Right cardiac atrium (tissue), 5 donors: ENCODE measurements at regions of chr1 and their contacts with region 1.

Region 1: DNA sequence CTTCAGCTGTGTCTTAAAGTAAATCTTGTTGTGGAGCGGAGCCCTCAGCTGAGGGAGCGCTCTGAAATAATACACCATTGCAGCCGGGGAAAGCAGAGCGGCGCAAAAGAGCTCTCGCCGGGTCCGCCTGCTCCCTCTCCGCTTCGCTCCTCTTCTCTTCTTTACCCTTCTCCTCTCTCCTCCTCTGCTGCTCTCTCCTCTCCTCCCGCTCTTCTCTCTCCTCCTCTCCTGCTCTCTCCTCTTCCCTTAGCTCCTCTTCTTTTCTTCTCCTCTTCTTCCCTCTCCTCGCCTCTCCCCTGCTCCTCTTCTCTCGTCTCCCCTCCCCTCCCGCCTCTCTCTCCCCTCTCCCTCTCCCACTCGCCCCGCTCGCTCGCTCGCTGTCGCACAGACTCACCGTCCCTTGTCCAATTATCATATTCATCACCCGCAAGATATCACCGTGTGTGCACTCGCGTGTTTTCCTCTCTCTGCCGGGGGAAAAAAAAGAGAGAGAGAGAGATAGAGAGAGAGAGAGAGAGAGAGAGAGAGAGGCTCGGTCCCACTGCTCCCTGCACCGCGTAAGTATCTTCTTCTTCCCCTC is at the start of gene PROX1:
- DNase-seq: peak; percentile 22 to 66 (median 63)
- ATAC-seq: peak; percentile 49 to 93
- H3K4me3 ChIP-seq: peak within 1 kb of the TSS; percentile 74
- H3K27ac ChIP-seq: peak within 1 kb of the TSS; percentile 74
- H3K4me1 ChIP-seq: no peaks in the 10 kb centered on the region
- H3K27me3 ChIP-seq: no peaks in the 10 kb centered on the region
- total RNA-seq, gene PROX1: 63.6 to 98.8 (median 86.5) TPM

Region 2: DNA sequence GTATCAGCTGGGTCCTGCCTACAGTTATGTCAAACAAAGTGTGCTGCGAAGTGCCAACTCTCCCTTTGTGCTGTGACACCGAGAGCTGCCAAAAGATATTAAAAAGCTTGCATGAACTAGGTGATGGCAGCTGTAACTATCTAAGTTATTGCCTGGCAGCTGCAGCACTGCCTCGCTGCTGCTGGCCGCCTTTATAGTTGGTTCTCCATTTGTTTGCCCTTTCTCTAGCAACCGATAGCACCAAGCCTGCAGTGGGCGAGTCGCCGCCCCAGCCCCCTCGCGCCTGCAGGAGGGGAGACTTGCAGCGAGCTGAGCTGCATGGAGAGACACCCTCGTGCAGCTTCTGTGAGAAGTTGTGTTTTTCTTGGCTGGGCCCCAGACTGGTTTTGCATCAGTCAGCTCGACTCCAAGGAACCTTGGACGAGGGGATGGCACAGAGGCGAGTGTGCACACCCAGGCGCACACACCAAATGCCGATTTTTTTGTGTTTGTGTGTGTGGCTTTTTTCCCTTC is 606.4 kb before region 1 on chr1:
- intact Hi-C with region 1: loop called in 1 of 4 experiments (anchors 5 kb)
- DNase-seq: peak; percentile 32 to 79 (median 69)
- ATAC-seq: peak; percentile 85 to 88
- H3K4me3 ChIP-seq: no peak overlapping the region
- H3K27ac ChIP-seq: no peak overlapping the region
- H3K4me1 ChIP-seq: no peaks in the 10 kb centered on the region
- H3K27me3 ChIP-seq: no peaks in the 10 kb centered on the region

Region 3: DNA sequence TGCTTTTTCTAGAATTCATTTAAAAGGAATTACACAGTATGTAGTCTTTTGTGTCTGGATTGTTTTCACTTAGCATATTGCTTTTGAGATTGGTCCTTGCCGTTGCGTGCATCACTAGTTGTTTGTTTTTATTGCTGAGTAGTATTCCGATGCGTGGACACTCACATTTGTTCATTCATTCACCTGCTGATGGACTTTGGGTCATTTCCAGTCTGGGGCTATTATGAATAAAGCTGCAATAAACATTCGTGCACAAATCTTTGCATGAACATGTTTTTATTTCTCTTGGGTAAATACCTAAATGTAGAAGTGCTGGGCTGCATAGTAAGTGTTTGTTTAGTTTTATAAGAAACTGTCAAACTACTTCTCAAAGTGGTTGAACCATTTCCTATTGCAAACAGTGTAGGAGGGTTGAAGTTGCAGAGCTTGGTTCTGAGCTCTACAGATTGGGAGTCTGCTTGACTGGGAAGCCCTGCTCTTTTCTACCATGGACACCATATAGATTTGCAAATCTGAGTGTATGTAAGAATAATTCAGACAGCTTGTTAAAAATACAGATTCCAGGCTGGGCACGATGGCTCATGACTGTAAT is 404.9 kb before region 1 on chr1:
- intact Hi-C with region 1: no loop called
- DNase-seq: no peak
- ATAC-seq: no peak
- H3K4me3 ChIP-seq: no peak overlapping the region
- H3K27ac ChIP-seq: no peak overlapping the region
- H3K4me1 ChIP-seq: no peaks in the 10 kb centered on the region
- H3K27me3 ChIP-seq: no peaks in the 10 kb centered on the region

Region 4: GRCh38 chr1:213905344-213905743 is 82.7 kb before region 1 on chr1:
- intact Hi-C with region 1: no loop called
- DNase-seq: peak; percentile 36 to 85 (median 80)
- ATAC-seq: peak; percentile 91 to 96
- H3K4me3 ChIP-seq: no peak overlapping the region
- H3K27ac ChIP-seq: no peak overlapping the region
- H3K4me1 ChIP-seq: no peaks in the 10 kb centered on the region
- H3K27me3 ChIP-seq: no peaks in the 10 kb centered on the region

Region 5: GRCh38 chr1:214029796-214030195 is 41.8 kb after region 1 on chr1:
- intact Hi-C with region 1: loop called in 1 of 4 experiments (anchors 2 kb)
- DNase-seq: no peak
- ATAC-seq: peak; percentile 82 to 83
- H3K4me3 ChIP-seq: no peak overlapping the region
- H3K27ac ChIP-seq: peak overlapping the region; percentile 98
- H3K4me1 ChIP-seq: peaks cover 2% of the 10 kb centered on the region
- H3K27me3 ChIP-seq: no peaks in the 10 kb centered on the region

Region 6: DNA sequence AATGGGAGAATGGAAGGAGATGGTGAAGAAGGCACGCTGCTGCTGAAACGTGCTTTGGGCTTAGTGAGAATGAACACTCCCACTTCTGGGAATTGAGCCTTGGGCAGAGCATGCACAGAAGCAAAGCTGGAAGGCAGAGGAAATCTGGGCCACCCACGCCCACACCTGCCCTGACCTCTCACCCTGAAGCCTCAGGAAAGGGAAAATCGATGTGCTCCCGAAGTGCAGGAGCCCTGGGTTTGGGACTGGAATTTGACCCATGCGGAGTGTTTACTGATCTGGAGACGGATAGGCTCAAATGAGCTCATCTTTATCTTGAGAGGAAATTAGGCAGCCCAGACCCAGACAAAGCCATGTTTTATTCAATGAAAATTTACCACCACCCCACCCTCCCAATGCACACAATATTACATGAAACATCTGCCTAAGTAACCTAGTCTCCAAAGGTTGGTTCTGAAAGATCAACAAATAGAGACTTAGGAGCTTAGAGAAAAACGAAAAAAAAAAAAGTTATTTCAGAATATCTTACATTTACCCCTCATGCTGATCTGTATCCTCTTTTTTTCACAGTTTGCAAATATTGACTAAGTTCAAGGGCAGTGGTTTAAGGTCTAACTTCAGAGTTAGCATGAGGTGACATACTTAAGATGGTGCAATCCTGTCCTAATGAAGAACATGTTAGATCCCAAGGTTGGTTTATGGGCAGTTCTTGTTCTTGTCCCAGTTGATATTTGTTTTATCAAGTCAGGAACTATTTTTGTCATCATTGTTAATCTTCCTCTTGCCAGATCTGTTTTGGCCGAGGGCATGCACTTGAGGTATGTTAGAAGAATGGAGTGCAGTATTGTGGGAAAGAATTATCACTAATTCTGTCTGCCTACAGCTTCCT is 62.7 kb after region 1 on chr1:
- intact Hi-C with region 1: no loop called
- DNase-seq: no peak
- ATAC-seq: peak; percentile 14 to 29
- H3K4me3 ChIP-seq: no peak overlapping the region
- H3K27ac ChIP-seq: no peak overlapping the region
- H3K4me1 ChIP-seq: peaks cover 2% of the 10 kb centered on the region
- H3K27me3 ChIP-seq: no peaks in the 10 kb centered on the region

Region 7: DNA sequence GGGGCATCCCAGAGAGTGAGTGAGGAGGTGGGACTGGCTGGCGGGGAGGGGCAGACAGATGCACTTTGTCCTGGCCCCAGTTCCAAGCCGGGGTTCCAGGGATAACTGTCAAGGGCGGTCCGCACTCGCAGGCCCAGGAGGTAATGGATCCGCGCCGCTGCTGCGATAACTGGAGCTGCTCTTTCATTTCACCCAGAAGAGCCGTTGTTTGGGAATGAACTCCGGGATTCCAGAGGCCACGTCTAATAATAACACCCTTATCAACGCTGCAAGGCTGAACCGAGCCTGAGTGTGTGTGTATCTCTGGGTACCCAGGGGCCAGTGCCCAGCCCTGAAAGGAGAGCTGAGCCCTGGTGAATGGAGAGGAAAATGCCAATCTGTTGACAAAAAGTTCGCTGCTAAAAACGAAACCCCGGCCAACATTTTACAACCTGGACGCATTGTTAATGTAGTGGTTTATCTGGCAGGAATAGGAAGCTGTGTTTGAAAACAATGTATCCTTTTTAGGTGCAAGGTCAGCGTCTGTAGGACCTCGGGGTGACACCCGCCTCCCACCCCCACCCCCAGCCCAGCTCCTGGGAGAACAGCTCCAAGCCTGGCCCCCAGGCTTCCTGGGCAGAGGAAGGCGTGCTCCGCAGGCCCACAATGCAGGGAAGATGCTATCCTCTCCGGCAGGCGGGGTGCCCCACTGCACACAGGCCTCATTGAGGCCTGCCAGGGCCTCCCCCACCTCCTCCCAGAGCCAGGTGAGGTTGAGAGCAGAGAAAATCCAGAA is 119.5 kb after region 1 on chr1:
- intact Hi-C with region 1: loop called in 3 of 4 experiments (anchors 5 to 10 kb)
- DNase-seq: peak; percentile 24 to 71 (median 65)
- ATAC-seq: peak; percentile 91 to 94
- H3K4me3 ChIP-seq: peak overlapping the region; percentile 12
- H3K27ac ChIP-seq: peak overlapping the region; percentile 91
- H3K4me1 ChIP-seq: no peaks in the 10 kb centered on the region
- H3K27me3 ChIP-seq: no peaks in the 10 kb centered on the region

Region 8: GRCh38 chr1:214116258-214116657 is 128.2 kb after region 1 on chr1:
- intact Hi-C with region 1: loop called in 3 of 4 experiments (anchors 5 to 10 kb)
- DNase-seq: no peak
- ATAC-seq: no peak
- H3K4me3 ChIP-seq: no peak overlapping the region
- H3K27ac ChIP-seq: no peak overlapping the region
- H3K4me1 ChIP-seq: no peaks in the 10 kb centered on the region
- H3K27me3 ChIP-seq: no peaks in the 10 kb centered on the region

Region 9: DNA sequence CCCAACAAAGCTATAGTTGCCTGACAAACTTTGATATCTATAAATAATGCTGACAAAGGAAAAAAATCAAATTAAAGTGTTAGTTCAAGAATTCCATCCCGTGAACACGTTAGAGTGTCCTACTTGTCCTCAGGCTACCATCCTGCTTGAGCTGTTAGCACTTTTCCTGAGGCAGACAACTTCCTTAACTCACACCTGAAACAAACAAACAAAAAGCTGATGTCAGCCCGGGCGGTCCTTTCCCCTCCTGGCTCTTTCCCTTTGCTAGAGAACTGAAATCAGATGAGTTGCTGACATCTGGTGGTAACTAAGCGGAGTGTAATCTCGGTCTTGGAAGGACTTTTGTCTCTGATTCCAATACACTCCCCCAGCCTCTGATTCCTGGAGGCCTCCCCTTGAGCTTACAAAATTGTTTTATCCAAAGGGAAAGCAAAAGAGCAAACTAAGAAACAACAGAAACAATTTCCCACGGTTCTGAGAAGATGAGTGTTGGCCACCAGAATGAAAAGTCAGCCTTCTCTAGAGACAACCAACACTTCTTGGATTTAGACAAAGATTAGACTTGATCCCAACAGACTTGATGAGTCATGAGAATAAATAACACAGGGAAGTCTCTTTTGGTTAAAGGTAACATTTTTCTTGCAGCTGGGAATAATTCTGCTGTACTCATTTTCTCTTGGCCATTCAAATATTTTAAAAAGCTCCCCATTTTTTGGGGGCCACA is 135.2 kb after region 1 on chr1:
- intact Hi-C with region 1: loop called in 2 of 4 experiments (anchors 5 to 10 kb)
- DNase-seq: peak in 1 of 3 donors; percentile 22
- ATAC-seq: peak; percentile 84 to 92
- H3K4me3 ChIP-seq: no peak overlapping the region
- H3K27ac ChIP-seq: no peak overlapping the region
- H3K4me1 ChIP-seq: no peaks in the 10 kb centered on the region
- H3K27me3 ChIP-seq: no peaks in the 10 kb centered on the region

Region 10: DNA sequence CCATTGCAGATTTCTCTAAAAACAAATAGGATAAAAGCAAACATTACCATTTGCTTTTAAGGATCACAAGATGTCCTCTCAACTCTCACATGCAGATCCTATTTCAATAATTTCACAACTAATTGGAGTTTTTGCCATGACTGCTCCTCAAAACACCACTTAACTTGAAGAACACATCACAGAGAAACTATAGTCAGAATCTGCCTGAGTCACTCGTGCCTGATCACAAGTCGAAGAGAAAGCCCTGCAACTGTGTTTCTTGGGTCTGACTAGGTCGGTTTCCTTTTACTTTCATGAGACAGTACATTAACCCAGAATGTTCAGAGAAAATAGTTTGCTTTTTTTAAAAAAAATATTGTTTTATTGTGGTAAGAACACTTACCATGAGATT is 246.6 kb after region 1 on chr1:
- intact Hi-C with region 1: no loop called
- DNase-seq: no peak
- ATAC-seq: no peak
- H3K4me3 ChIP-seq: no peak overlapping the region
- H3K27ac ChIP-seq: no peak overlapping the region
- H3K4me1 ChIP-seq: no peaks in the 10 kb centered on the region
- H3K27me3 ChIP-seq: peaks cover 4% of the 10 kb centered on the region